ENCODE measurements at regions of chr1 and their contacts with region 1.

Region 1: DNA sequence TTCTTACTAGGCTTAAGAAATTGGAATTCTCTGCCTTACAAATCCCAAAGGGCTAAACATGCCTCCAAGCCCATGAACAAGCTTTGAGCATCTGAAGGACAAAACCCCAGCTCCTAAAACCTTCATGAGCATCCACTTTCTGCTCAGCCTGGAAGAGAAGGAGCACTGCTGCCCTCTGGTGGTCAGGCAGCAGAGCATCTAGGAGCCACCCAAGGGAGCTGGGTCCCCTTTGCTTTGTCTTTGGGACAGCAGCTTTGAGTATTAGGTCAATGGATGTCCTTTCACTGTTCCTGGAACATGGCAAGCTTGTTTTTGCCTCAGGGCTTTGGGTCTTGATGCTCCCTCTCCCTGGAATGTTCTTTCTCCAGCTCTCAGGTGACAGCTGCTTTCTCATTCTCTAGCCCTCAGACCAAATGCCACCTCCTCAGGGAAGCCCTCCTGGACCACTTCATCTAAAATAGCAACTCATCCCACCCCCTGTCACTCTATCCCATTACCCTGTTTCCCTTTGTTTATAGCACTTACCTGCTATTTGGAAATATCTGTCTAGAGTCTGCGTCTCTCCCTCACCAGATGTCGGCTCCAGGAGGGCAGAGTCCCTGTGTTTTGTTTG is 25.7 kb downstream of the RAB7B start:
- DNase-seq: peak; percentile 62 to 90
- ATAC-seq: peak; percentile 72 to 92 (median 89)
- H3K4me3 ChIP-seq: no peak overlapping the region
- H3K4me3 Mint-ChIP-seq: no peak overlapping the region
- H3K27ac ChIP-seq: no peak overlapping the region
- H3K27ac Mint-ChIP-seq: no peak overlapping the region
- H3K4me1 ChIP-seq: no peaks in the 10 kb centered on the region
- H3K4me1 Mint-ChIP-seq: peaks cover 0 to 6% of the 10 kb centered on the region in 2 donors
- H3K27me3 ChIP-seq: no peaks in the 10 kb centered on the region
- H3K27me3 Mint-ChIP-seq: peaks cover 0 to 2% of the 10 kb centered on the region in 2 donors
- CTCF ChIP-seq: peak; percentile 91

Region 2: GRCh38 chr1:205528887-205529825 is 448.4 kb before region 1 on chr1:
- intact Hi-C with region 1: loop called (anchors 2 kb)
- DNase-seq: peak; percentile 81 to 88
- ATAC-seq: peak; percentile 76 to 91 (median 88)
- H3K4me3 ChIP-seq: no peak overlapping the region
- H3K4me3 Mint-ChIP-seq: peak overlapping the region; percentile 35
- H3K27ac ChIP-seq: no peak overlapping the region
- H3K27ac Mint-ChIP-seq: no peak overlapping the region
- H3K4me1 ChIP-seq: peaks cover 9% of the 10 kb centered on the region
- H3K4me1 Mint-ChIP-seq: peaks cover 0 to 7% of the 10 kb centered on the region in 2 donors
- H3K27me3 ChIP-seq: no peaks in the 10 kb centered on the region
- H3K27me3 Mint-ChIP-seq: peaks cover 0 to 7% of the 10 kb centered on the region in 2 donors
- CTCF ChIP-seq: peak; percentile 95

Region 3: DNA sequence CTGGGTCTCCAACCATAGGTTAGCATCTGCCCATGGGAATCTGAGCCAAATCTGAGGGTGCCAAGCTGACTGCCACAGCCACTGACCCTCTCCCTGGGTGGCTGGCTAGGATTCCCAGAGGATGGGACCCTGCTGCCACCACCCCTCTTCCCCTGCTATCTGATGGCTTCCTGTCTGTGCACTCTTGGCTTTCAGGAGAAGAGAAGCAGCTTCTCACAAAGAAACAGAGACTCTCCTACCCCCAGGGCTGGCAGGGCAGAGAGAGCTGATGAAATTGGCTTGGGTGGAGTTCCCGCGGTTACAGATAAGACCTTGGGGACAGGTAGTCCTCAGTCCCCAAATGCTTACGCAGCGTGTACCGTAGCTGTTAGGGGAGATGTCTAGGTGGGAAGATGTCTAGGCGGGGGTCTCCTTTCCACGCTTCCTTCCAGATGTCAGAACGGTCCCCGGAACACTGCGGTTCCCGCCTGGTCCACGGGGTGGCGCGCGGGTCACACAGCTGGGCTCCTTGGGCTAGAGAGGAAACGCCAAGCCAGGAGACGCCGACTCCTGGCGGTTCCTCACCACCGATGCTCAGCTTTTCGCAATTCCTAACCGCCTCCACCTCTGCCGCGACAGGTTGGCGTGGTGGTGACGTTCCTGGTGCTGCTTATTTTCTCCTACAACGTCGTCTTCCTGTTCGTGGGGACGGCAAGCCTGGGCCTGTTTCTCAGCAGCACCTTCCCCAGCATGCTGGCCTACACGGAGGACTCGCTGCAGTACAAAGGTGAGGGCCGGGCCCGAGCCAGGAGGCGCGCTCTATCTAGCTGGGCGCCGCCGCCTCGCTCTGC is 385.8 kb before region 1 on chr1:
- intact Hi-C with region 1: loop called (anchors 5 kb)
- DNase-seq: peak; percentile 88 to 93
- ATAC-seq: peak; percentile 92 to 96 (median 94)
- H3K4me3 ChIP-seq: peak overlapping the region; percentile 36
- H3K4me3 Mint-ChIP-seq: peak overlapping the region; percentile 79
- H3K27ac ChIP-seq: peak overlapping the region; percentile 43
- H3K27ac Mint-ChIP-seq: peak overlapping the region; percentile 68 to 85
- H3K4me1 ChIP-seq: peaks cover 27% of the 10 kb centered on the region
- H3K4me1 Mint-ChIP-seq: peaks cover 13% of the 10 kb centered on the region in 2 donors
- H3K27me3 ChIP-seq: no peaks in the 10 kb centered on the region
- H3K27me3 Mint-ChIP-seq: peaks cover 0 to 3% of the 10 kb centered on the region in 2 donors
- CTCF ChIP-seq: peak; percentile 95

Region 4: DNA sequence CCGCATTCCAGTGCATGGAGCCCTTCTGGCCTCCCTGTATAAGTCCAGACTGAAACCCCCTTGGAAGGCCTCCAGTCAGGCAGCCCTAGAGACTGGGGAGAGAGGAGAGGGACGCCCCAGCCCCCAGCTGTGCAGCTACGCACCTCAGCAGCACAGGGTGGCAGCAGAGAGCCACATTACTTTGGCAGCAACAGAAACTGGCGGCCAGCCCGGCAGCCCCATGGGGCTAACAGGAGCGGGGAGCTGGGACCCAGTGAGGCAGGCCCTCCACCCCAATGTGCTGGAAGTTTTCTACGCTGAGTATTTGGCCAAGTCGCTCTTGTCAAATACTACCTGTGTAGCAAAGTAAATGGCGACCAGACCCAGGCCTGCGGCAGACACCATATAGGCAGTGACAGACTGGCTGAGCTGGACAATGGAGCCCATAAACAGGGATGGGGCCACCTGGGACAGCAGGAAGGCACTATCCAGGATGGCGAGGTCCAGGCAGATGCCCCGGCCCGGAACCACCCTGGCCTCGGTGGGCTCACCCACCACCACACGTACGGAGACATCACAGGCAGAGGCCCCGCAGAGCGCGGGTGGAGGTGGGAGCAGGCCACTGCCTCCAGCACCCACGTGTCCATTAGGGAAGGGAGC is 318.4 kb before region 1 on chr1:
- intact Hi-C with region 1: loop called (anchors 1 kb)
- DNase-seq: peak; percentile 62 to 84
- ATAC-seq: peak; percentile 86 to 97 (median 92)
- H3K4me3 ChIP-seq: no peak overlapping the region
- H3K4me3 Mint-ChIP-seq: no peak overlapping the region
- H3K27ac ChIP-seq: no peak overlapping the region
- H3K27ac Mint-ChIP-seq: no peak overlapping the region
- H3K4me1 ChIP-seq: no peaks in the 10 kb centered on the region
- H3K4me1 Mint-ChIP-seq: peaks cover 0 to 4% of the 10 kb centered on the region in 2 donors
- H3K27me3 ChIP-seq: no peaks in the 10 kb centered on the region
- H3K27me3 Mint-ChIP-seq: peaks cover 0 to 2% of the 10 kb centered on the region in 2 donors
- CTCF ChIP-seq: peak; percentile 70

Region 5: DNA sequence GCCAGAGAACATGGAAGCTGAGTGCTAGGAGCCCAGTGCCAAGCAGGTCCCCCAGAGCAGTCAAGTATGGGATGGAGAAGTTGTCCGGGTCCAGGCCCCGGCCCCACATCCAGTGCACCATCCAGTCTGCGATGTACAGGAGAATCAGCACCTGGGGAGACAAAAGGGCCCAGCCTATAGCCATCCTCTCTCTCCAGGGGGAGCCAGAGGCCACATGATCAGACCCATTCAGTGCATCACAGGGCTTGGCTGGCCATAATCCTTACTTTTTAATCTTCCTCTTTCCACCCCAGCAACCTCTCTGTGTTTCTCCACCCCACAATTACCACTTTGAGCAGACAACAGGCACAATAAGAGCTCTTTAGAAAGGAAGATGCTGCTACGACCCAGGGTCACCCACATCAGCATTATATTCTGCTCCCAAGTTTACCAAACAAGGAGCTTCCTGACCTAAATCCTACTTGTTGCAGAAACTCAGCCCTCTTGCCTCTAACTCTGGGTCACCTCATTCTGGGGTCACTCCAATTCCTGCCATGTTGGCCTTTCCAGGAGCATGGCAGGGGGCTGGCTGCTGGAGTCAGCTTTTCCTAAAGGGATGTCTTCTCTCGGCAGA is 185.8 kb before region 1 on chr1:
- intact Hi-C with region 1: loop called (anchors 1 kb)
- DNase-seq: peak; percentile 46 to 80
- ATAC-seq: peak; percentile 73 to 90 (median 89)
- H3K4me3 ChIP-seq: no peak overlapping the region
- H3K4me3 Mint-ChIP-seq: no peak overlapping the region
- H3K27ac ChIP-seq: no peak overlapping the region
- H3K27ac Mint-ChIP-seq: no peak overlapping the region
- H3K4me1 ChIP-seq: no peaks in the 10 kb centered on the region
- H3K4me1 Mint-ChIP-seq: no peaks in the 10 kb centered on the region
- H3K27me3 ChIP-seq: no peaks in the 10 kb centered on the region
- H3K27me3 Mint-ChIP-seq: no peaks in the 10 kb centered on the region
- CTCF ChIP-seq: peak; percentile 69

Region 6: GRCh38 chr1:205919026-205919746 is 58.3 kb before region 1 on chr1:
- intact Hi-C with region 1: loop called (anchors 1 kb)
- DNase-seq: peak; percentile 54 to 78
- ATAC-seq: peak; percentile 64 to 87 (median 69)
- H3K4me3 ChIP-seq: no peak overlapping the region
- H3K4me3 Mint-ChIP-seq: no peak overlapping the region
- H3K27ac ChIP-seq: no peak overlapping the region
- H3K27ac Mint-ChIP-seq: no peak overlapping the region
- H3K4me1 ChIP-seq: peaks cover 7% of the 10 kb centered on the region
- H3K4me1 Mint-ChIP-seq: no peaks in the 10 kb centered on the region
- H3K27me3 ChIP-seq: no peaks in the 10 kb centered on the region
- H3K27me3 Mint-ChIP-seq: no peaks in the 10 kb centered on the region
- CTCF ChIP-seq: peak; percentile 72

Region 7: DNA sequence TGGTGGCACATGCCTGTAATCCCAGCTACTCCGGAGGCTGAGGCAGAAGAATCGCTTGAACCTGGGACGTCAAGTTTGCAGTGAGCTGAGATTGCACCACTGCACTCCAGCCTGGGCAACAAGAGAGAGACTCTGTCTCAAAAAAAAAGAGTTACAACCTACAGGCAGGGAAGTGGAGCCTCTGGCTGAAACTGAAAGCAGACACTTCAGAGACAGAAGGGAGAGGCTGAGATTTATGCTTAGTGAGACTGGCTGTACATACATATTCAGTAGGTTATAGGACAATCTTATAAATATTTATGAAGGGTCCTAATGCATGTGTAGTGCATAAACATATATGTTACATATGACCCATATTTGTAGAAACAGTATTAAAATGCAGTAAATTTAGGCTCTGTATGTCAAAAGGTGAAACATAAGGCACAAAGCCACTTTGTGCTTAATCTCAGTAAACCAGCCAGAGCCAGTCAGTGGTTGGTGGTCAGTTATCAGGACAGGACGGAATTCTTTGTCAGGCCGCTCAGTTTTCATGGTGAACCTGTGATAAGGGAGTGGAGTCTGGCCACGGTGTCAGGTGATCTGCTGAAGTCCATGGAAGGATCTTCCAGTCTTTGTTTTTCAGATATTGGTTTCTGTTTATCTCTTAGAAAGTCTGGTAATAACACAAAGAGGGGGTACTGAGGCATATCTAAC is 89.1 kb after region 1 on chr1:
- intact Hi-C with region 1: no loop called
- DNase-seq: peak in 1 of 2 donors; percentile 11
- ATAC-seq: no peak
- H3K4me3 ChIP-seq: no peak overlapping the region
- H3K4me3 Mint-ChIP-seq: no peak overlapping the region
- H3K27ac ChIP-seq: no peak overlapping the region
- H3K27ac Mint-ChIP-seq: no peak overlapping the region
- H3K4me1 ChIP-seq: peaks cover 4% of the 10 kb centered on the region
- H3K4me1 Mint-ChIP-seq: no peaks in the 10 kb centered on the region
- H3K27me3 ChIP-seq: no peaks in the 10 kb centered on the region
- H3K27me3 Mint-ChIP-seq: peaks cover 0 to 9% of the 10 kb centered on the region in 2 donors
- CTCF ChIP-seq: no peak

Measured in natural killer cell (primary cell).